Posterior vena cava (tissue), 2 donors: ENCODE measurements at regions of chr12 and their contacts with region 1.

Region 1: GRCh38 chr12:116687888-116688287 is 50.0 kb downstream of the SPRING1 start:
- DNase-seq: no peak

Region 2: DNA sequence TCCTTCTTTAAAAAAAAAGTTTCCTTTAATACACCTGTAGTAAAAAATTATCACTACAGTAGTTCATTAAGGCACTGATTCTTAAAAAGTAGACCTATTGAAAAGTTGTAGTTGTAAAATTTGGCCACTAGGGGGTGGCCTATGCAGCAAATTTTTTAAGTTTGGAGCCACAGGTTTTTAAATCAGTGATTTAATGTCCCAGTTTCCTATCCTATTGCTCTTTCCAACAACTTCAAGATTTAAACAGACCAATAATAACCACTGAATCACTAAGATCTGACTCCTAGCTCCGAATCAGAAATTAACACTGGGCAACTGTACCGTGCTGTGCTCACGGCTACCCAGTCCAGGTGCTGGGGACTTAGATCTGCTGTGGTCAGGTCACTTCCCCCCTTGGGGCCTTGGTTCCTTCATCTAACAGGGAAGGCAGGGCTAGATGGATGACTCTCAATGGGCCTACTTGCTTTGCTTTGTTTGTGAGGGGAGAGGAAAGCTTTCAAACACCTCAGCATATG is 689.7 kb before region 1 on chr12:
- intact Hi-C with region 1: loop called in 1 of 2 experiments (anchors 10 kb)
- DNase-seq: no peak